Activated naive CD4-positive, alpha-beta T cell treated with anti-CD3 and anti-CD28 coated beads for 36 hours (primary cell): ENCODE measurements at regions of chr1 and their contacts with region 1.

Region 1: DNA sequence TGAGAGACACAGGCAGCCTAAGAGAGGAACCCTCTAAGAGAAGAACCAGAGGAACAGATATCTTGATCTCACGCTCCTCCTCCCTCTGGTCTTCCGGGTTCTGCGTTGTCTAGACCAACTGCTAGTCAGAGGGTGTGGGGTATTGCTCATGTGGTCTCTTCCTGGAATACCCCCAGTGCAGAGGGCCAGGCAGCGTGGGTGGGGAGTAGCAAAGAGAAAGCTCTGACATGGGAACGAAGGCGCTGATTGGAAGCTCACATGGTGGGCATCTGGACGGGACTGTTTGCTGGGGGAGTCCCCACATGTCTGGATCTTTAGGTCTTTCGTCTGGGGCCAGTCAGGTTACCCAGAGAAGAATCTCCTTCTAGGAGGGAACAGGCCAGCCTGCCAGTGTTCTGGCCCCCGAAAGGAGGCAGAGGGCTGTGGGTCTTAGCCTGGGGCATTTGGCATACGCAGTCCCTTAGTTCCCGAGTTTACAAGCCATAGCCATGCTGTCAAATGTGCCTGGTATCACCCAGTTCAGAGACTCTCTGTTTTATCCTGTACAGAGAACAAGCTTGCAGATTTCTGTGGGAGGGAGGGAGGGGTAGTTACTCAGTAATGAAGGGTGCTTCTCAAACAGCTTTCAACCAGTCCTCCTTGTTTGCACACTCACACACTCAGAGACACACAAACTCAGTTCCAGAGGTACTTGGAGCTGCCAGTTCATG is 18.3 kb upstream of the IL6R start:
- DNase-seq: peak; percentile 88
- H3K4me3 Mint-ChIP-seq: peak overlapping the region; percentile 60
- H3K27ac Mint-ChIP-seq: peak overlapping the region; percentile 90
- H3K4me1 Mint-ChIP-seq: peaks cover 39% of the 10 kb centered on the region
- H3K27me3 Mint-ChIP-seq: no peaks in the 10 kb centered on the region

Region 2: GRCh38 chr1:154335025-154335714 is 51.6 kb before region 1 on chr1:
- CTCF ChIA-PET with region 1: interaction called, 10 read pairs
- intact Hi-C with region 1: no loop called
- DNase-seq: peak; percentile 97
- H3K4me3 Mint-ChIP-seq: peak overlapping the region; percentile 30
- H3K27ac Mint-ChIP-seq: peak overlapping the region; percentile 88
- H3K4me1 Mint-ChIP-seq: peaks cover 62% of the 10 kb centered on the region
- H3K27me3 Mint-ChIP-seq: no peaks in the 10 kb centered on the region

Region 3: DNA sequence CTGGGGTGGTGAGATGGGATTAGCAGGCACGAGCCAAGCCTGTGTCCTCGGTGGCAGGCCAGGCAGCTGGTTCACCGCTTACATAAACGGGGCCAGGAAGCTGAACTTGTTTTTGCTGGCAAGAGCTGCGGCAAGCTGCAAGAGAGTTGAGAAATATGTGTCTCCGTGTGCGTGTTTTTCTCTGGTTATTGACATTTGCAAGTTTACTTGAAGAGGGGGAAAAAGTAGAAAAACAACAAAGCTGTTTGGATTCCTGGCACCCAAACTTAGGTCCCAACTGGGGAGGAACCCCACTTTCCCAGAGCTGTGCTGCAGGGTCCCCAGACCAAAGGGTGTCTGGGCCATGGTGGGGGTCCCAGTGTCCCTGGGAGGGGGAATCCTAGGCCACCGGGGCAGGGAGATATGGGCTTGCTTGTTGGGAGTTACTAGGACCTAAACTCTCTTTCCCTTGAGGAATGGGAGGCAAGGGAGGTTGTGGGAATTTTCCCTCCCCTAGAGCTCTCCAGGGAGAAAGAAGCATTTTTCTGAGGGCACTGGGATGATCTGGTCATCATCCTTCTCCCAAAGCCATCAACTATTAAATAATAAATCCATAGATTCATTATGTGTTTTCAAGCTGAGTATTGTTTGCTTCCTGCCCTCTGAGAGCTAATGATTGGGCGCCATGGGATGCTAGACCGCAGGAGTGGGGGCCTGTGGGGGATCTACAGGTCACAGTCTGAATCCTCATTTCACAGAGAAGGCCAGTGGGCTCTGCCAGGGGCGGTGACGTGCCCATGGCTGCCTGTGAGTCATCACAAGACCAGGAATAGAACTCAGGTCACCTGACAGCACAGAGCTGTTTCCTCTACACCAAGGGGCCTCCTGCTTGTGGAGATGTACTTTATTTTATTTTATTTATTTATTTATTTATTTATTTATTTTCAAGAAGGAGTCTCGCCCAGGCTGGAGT is 33.1 kb after region 1 on chr1:
- CTCF ChIA-PET with region 1: no interaction called
- intact Hi-C with region 1: no loop called
- DNase-seq: peak; percentile 90
- H3K4me3 Mint-ChIP-seq: peak overlapping the region; percentile 52
- H3K27ac Mint-ChIP-seq: peak overlapping the region; percentile 88
- H3K4me1 Mint-ChIP-seq: peaks cover 85% of the 10 kb centered on the region
- H3K27me3 Mint-ChIP-seq: no peaks in the 10 kb centered on the region